ENCODE measurements at regions of chr1 and their contacts with region 1.

Region 1: DNA sequence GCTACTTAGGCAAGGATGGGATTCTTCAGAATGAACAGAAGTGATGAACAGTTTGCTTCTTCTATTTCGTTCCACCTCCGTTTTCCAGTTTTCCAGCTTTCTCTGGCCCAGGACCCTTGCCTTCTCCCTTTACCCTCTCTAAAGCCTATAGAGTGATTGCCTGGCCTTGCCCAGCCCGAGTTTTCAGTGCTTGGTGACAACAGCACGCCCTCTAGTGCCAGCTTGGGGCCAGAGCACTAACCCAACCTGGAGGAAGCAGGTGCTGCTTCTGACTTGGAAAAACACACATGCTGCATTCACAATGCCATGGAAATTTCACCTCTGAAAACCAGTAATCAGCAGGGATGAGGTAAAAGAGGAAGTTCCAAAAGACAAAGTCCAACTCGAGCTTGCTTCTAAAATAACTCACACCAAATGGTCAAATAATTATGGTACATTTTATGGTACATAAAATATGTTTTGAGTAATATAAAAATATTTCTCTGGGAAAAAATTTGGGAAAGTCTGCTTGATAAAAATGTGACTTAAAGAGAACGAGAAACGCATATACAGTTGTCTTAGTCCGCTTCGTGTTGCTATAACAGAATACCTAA is 26.1 kb downstream of the UBE2T start:
- DNase-seq: peak; percentile 52
- H3K4me3 ChIP-seq: no peak overlapping the region
- H3K27ac ChIP-seq: no peak overlapping the region
- H3K27me3 ChIP-seq: peaks cover 6% of the 10 kb centered on the region
- CTCF ChIP-seq: peak; percentile 100

Region 2: DNA sequence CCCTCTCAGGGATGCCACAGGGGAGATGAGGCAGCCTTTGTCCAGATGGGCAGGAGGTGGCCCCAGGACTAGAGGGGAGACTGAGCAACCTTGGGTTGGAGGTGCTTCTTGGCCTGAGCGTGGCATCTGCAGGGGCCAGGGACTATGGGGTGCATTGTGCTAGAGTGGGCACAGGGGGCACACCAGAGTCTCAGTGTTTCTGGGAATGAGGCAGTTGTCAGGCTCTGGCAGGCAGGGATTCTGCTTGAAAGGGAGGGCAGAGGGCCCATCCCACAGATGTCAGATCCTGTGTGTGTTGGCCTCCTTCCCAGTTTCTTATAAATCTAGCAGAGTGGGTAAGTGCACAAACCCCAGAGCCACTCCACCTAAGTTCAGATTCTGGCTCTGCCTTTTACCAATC is 108.4 kb before region 1 on chr1:
- in situ Hi-C with region 1: loop called (anchors 25 kb)
- DNase-seq: peak; percentile 69
- H3K4me3 ChIP-seq: no peak overlapping the region
- H3K27ac ChIP-seq: no peak overlapping the region
- H3K27me3 ChIP-seq: peaks cover 8% of the 10 kb centered on the region
- CTCF ChIP-seq: peak; percentile 58

Measured in brain microvascular endothelial cell (primary cell).